Right lobe of liver (tissue), 6 donors: ENCODE measurements at regions of chr1 and their contacts with region 1.

Region 1: DNA sequence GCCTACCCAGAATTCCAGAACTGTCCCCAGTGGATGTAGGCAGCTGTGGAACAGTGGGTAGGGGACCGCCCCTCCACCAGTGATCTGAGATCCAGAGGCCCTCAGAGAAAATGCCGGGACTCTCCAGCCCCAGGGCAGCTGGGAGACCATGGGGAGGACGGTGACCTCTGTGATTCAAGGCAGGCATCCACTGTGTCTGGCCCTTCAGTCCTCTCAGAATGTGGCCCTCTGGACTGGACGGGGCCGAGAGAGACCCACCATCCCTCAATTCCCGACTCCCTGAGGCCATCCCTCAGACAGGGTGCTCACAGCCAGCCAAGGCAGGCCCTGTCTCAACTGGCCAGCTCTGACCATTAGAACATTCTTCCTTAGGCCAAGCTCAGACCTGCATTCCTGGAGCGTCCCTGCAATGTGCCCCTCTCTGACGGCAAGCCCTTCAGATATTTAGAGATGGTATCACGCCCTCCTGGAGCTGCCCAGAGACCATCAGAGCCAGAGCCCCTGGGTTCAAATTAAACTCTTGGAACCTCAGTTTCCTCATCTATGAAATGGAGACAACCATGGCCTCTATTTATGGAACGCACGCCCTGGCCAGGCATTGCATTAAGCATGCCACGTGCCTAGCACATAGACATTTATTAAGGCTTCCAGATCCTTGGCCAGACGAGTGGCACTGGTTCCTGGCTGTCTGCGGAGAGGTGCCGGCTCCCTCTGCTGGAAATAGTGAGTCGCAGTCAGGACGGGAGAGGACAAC is 9.6 kb upstream of the EPS8L3 start:
- DNase-seq: peak; percentile 82 to 86 (median 85)
- ATAC-seq: peak; percentile 90 to 92 (median 92)
- H3K4me3 ChIP-seq: no peak overlapping the region
- H3K27ac ChIP-seq: no peak overlapping the region
- H3K4me1 ChIP-seq: no peaks in the 10 kb centered on the region
- H3K27me3 ChIP-seq: no peaks in the 10 kb centered on the region
- CTCF ChIP-seq: peak; percentile 82 to 91 (median 87)
- POLR2A ChIP-seq: no peak

Region 2: GRCh38 chr1:109548321-109549267 is 224.7 kb before region 1 on chr1 and contains the start of gene GNAI3:
- intact Hi-C with region 1: loop called (anchors 10 kb)
- DNase-seq: peak; percentile 96 to 98 (median 98)
- ATAC-seq: peak; percentile 93 to 97 (median 94)
- H3K4me3 ChIP-seq: peak within 1 kb of the TSS; percentile 85 to 89 (median 88)
- H3K27ac ChIP-seq: peak within 1 kb of the TSS; percentile 92 to 97 (median 95)
- H3K4me1 ChIP-seq: peaks cover 0 to 28% (median 3%) of the 10 kb centered on the region in 4 donors
- H3K27me3 ChIP-seq: no peaks in the 10 kb centered on the region
- CTCF ChIP-seq: no peak
- POLR2A ChIP-seq: peak; percentile 99
- total RNA-seq, gene GNAI3: 2.5 to 4.3 (median 3.3) TPM

Region 3: DNA sequence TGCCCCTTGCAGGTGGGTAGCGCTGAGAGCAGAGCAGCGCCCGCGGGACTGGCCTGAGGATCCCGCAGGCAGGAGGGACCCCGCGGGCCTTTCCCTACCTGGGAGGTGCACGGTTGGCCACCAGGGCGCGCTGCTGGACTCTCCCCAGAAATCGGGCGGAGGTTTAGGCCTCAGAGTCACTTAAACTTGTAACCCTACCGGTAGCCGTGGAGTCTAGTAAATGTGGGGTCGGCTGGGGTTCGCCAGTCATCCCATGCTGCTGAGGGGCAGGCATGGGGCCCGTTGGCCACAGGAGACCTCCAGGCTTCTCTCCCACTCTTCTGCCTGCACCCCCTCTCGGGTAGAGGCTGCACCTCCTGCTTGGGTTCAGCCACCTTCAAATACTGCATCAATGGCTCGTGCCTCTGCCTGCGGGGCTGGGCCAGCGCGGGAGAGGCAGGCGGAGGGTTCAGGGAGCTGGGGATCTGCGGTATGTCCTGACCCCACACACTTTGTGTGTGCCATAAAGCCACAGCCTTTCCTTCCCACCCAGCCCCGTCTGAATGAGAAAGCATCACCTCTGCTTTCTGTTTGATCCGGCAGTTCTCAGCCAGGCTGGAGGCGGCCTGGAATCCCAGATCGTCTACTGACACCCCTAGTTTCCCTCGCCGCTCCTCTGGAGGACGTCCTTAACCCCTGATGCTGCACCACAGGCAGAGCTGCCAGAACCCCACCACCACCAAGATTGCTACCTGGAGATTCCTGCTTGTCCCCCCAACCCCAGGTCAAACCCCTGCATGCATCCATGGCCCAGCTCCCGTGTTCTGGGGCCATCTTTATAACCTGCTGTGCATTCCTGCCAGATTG is 129.7 kb before region 1 on chr1:
- intact Hi-C with region 1: loop called (anchors 5 kb)
- DNase-seq: peak; percentile 87 to 89 (median 88)
- ATAC-seq: peak; percentile 93 to 97 (median 94)
- H3K4me3 ChIP-seq: no peak overlapping the region
- H3K27ac ChIP-seq: no peak overlapping the region
- H3K4me1 ChIP-seq: peaks cover 0 to 7% (median 0%) of the 10 kb centered on the region in 4 donors
- H3K27me3 ChIP-seq: no peaks in the 10 kb centered on the region
- CTCF ChIP-seq: peak; percentile 88 to 94 (median 90)
- POLR2A ChIP-seq: no peak

Region 4: DNA sequence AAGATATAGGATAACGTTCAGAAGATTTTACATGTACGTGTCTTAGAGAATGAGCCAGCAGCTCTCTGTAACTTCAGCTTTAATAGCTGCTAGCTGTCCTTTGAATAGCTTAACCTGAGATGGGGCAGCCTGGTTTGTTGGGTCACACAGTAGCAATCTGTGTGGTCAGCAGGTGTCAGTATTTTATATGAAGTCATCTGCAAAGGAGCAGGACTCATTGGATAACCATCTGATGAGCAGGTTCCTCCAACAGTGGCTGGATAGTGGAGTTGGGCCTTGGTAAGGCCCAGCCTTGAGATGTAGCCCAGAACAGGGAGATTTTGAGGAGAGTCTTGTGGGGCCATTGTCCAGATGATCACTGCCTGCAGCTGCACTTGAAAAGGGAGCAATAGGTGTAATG is 54.8 kb before region 1 on chr1:
- intact Hi-C with region 1: no loop called
- DNase-seq: no peak
- ATAC-seq: peak; percentile 66 to 97 (median 78)
- H3K4me3 ChIP-seq: no peak overlapping the region
- H3K27ac ChIP-seq: no peak overlapping the region
- H3K4me1 ChIP-seq: no peaks in the 10 kb centered on the region
- H3K27me3 ChIP-seq: no peaks in the 10 kb centered on the region
- CTCF ChIP-seq: peak; percentile 16 to 35 (median 24)
- POLR2A ChIP-seq: no peak

Region 5: DNA sequence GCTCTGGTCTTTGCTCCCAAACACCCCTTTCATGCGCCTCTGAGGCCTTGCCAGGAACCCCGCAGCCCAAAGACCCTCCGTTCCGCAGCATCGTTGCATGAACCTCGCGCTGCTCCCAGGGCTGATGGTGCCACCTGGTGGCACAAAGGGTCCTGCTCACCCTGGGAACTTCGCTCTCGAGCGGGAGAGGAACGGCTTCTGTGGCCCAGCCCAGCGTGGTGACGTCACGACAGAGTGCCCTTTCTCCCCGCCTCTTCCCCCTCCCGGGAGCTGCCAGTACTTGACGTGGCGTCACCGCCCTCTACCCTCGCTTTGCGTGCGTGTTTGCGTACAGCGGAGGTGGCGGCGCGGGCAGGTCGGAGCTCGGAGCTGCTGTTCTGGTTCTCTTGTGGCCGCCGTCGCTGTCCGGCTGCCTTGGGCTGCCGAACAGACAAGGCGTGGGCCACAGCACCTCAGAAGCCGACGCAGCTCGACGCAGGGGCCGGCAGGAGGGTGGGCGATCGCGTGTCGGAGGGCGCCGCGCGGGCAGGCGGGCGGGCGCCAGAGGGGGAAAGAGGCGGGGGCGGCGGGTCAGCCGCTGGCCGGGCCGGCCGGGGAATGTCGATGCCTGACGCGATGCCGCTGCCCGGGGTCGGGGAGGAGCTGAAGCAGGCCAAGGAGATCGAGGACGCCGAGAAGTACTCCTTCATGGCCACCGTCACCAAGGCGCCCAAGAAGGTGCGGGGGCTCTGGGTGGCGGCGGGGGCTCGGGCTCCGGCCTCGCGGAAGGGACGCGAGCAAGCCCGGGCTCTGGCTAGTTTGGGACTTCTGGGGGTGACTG is 211.3 kb after region 1 on chr1 and contains the start of gene AHCYL1:
- intact Hi-C with region 1: loop called (anchors 5 kb)
- DNase-seq: peak; percentile 100
- ATAC-seq: peak; percentile 93 to 96 (median 94)
- H3K4me3 ChIP-seq: peak within 1 kb of the TSS; percentile 60 to 82 (median 77)
- H3K27ac ChIP-seq: peak within 1 kb of the TSS; percentile 90 to 97 (median 95)
- H3K4me1 ChIP-seq: peaks cover 0 to 68% (median 23%) of the 10 kb centered on the region in 4 donors
- H3K27me3 ChIP-seq: no peaks in the 10 kb centered on the region
- CTCF ChIP-seq: peak; percentile 98 to 99 (median 98)
- POLR2A ChIP-seq: peak; percentile 98
- total RNA-seq, gene AHCYL1: 51.4 to 77.5 (median 56.0) TPM